ENCODE measurements at regions of chr5 and their contacts with region 1.

Region 1: GRCh38 chr5:172770675-172771438 is at the start of gene DUSP1:
- DNase-seq: peak; percentile 99 to 100
- ATAC-seq: peak; percentile 63 to 88 (median 70)
- H3K4me3 ChIP-seq: peak within 1 kb of the TSS; percentile 62 to 99 (median 92)
- H3K27ac ChIP-seq: peak within 1 kb of the TSS; percentile 95 to 100 (median 100)
- H3K4me1 ChIP-seq: peaks cover under 1 to 87% (median 36%) of the 10 kb centered on the region in 9 donors
- H3K27me3 ChIP-seq: no peaks in the 10 kb centered on the region
- CTCF ChIP-seq: peak in 8 of 9 donors; percentile 16 to 59 (median 39)
- total RNA-seq, gene DUSP1: 55.7 to 215 (median 143) TPM

Region 2: DNA sequence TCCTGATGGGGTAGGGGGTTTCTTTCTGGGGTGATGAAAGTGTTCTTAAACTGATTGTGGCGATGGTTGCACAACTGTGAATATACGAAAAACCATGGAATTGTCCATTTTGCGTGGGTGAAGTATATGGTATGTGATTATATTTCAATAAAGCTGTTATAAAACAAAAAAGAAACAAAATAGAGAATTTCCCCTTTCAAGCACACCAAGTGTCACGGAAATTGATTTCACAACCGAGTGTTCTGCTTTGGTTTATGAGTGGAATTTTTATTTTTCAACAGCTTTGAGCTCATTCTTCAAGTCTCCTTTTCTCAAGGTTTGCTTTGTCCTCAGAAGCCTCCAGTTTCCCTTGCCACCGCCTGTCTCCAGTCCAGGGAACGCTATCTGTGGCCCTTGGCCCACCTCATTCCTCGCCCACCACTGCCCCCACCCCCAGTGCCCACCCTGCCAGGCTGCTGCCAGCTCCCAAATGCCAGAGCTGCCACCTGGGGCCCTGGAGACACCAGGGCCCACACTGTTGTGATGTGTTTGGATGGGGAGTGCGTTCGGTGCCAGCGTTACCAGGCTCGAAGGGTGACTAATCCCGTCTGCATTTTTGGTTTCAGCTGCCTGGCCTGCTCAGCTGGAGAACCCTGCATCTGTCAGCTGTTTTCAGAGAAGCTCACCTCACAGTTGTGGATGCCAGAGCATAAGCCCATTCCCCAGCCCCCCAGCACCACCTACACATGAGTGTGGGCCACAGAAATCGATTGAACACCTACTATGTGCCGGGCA is 30.2 kb before region 1 on chr5:
- intact Hi-C with region 1: no loop called
- DNase-seq: peak; percentile 79 to 83
- ATAC-seq: peak; percentile 86 to 95 (median 92)
- H3K4me3 ChIP-seq: no peak overlapping the region
- H3K27ac ChIP-seq: peak overlapping the region; percentile 67 to 85 (median 83)
- H3K4me1 ChIP-seq: peaks cover 0 to 34% (median 13%) of the 10 kb centered on the region in 9 donors
- H3K27me3 ChIP-seq: no peaks in the 10 kb centered on the region
- CTCF ChIP-seq: no peak

Region 3: GRCh38 chr5:172795318-172795977 is 24.6 kb after region 1 on chr5:
- intact Hi-C with region 1: loop called in 1 of 10 experiments (anchors 1 kb)
- DNase-seq: peak; percentile 93 to 96
- ATAC-seq: peak; percentile 93 to 97 (median 95)
- H3K4me3 ChIP-seq: no peak overlapping the region
- H3K27ac ChIP-seq: peak overlapping the region; percentile 19 to 95 (median 74)
- H3K4me1 ChIP-seq: peaks cover 6 to 84% (median 25%) of the 10 kb centered on the region in 9 donors
- H3K27me3 ChIP-seq: no peaks in the 10 kb centered on the region
- CTCF ChIP-seq: peak in 1 of 9 donors; percentile 6

Region 4: GRCh38 chr5:172834415-172835289 is 63.8 kb after region 1 on chr5:
- intact Hi-C with region 1: loop called in 2 of 10 experiments (anchors 2 to 10 kb)
- DNase-seq: no peak
- ATAC-seq: peak; percentile 4 to 54 (median 20)
- H3K4me3 ChIP-seq: peak overlapping the region; percentile 82 to 98 (median 88)
- H3K27ac ChIP-seq: peak overlapping the region; percentile 80 to 91 (median 88)
- H3K4me1 ChIP-seq: peaks cover 2 to 62% (median 31%) of the 10 kb centered on the region in 9 donors
- H3K27me3 ChIP-seq: no peaks in the 10 kb centered on the region
- CTCF ChIP-seq: peak in 1 of 9 donors; percentile 5

Region 5: DNA sequence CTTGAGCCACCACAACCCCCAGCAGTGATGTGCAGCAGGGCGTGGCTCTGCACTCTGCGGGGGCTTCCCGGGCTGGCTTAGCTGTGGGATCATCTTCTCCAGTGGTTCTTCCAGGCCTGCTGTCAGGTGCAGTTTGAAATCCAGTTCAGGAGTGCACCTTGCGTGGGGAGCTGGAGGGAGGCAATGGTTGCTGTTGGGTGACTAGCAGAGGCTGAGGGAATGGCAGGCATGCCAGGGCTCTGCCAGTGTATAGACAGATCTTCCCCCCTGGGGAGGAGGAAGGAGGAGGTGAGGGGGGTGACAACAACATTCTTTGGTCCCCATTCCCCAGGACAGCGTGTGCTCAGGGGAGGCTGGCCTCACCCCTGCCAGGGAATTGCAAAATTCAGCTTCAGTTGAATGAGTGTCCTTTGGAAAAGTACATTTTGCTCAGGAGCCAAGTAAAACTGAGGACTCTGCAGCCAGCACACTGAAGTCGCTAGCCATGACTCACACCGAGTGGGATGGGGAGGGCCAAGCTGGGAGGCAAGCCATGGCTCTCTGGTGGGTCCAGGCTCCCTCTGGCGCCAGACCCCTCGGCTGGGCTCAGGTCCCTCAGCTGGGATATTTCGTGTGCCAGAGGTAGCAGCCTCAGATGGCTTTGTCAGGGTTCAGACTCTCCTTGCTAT is 98.2 kb after region 1 on chr5:
- intact Hi-C with region 1: loop called in 7 of 10 experiments (anchors 1 to 10 kb)
- DNase-seq: peak; percentile 80 to 81
- ATAC-seq: peak; percentile 46 to 81 (median 70)
- H3K4me3 ChIP-seq: no peak overlapping the region
- H3K27ac ChIP-seq: peak overlapping the region; percentile 82 to 97 (median 92)
- H3K4me1 ChIP-seq: peaks cover 60 to 98% (median 89%) of the 10 kb centered on the region in 9 donors
- H3K27me3 ChIP-seq: no peaks in the 10 kb centered on the region
- CTCF ChIP-seq: peak in 5 of 9 donors; percentile 19 to 48 (median 37)

Region 6: GRCh38 chr5:172932313-172933017 is 161.6 kb after region 1 on chr5:
- intact Hi-C with region 1: loop called in 8 of 10 experiments (anchors 1 to 10 kb)
- DNase-seq: peak; percentile 67 to 79
- ATAC-seq: peak; percentile 77 to 91 (median 85)
- H3K4me3 ChIP-seq: no peak overlapping the region
- H3K27ac ChIP-seq: peak overlapping the region in 9 of 10 donors; percentile 44 to 81 (median 74)
- H3K4me1 ChIP-seq: peaks cover 13 to 28% (median 21%) of the 10 kb centered on the region in 9 donors
- H3K27me3 ChIP-seq: no peaks in the 10 kb centered on the region
- CTCF ChIP-seq: peak; percentile 94 to 98 (median 97)

Measured in heart right ventricle (tissue), 16 donors.